ENCODE measurements at regions of chr14 and their contacts with region 1.

Region 1: GRCh38 chr14:75783184-75783583 is 122.1 kb downstream of the TTLL5 start:
- DNase-seq: no peak
- ATAC-seq: no peak
- H3K4me3 ChIP-seq: no peak overlapping the region
- H3K27ac ChIP-seq: no peak overlapping the region
- H3K4me1 ChIP-seq: no peaks in the 10 kb centered on the region
- CTCF ChIP-seq: no peak
- EP300 ChIP-seq: no peak
- POLR2A ChIP-seq: no peak
- RAD21 ChIP-seq: no peak

Region 2: DNA sequence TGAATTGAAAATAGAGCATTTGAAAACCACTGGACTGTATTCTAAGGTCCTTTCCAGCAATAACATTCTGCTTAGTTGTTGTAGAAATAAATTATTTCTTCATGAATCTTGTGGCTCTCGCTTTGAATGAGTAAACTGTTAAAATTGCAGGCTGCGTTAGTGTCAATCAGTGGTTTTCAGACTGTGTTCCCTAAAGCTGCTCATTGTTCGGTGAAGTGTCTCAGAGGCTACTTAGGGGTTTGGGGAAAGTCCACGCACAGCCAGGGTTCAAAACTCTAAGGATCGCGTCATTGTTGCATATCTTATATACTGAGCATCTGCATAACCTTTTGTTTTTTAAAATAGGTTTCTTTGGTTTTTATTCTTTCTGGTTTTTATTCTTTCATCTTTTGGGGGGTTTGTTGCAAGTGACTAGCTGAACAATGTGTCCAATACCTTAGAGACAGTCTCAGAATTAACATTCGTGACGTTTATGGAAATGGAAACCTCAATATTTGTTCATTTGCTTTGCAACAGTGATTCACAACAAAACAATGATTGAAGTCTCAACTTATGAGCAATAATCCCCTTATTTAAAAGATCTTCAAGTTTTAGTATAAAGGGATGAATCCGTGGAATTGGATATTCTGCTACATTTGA is 14.0 kb before region 1 on chr14:
- CTCF ChIA-PET with region 1: no interaction called
- POLR2A ChIA-PET with region 1: no interaction called
- DNase-seq: no peak
- ATAC-seq: no peak
- H3K4me3 ChIP-seq: no peak overlapping the region
- H3K27ac ChIP-seq: no peak overlapping the region
- H3K4me1 ChIP-seq: no peaks in the 10 kb centered on the region
- CTCF ChIP-seq: no peak
- EP300 ChIP-seq: no peak
- POLR2A ChIP-seq: no peak
- RAD21 ChIP-seq: no peak

Region 3: GRCh38 chr14:75794615-75795038 is 11.4 kb after region 1 on chr14:
- CTCF ChIA-PET with region 1: interaction called, 12 read pairs
- POLR2A ChIA-PET with region 1: no interaction called
- DNase-seq: peak in 1 of 2 experiments; percentile 9
- ATAC-seq: peak; percentile 71 to 77; a peak in 4 of 6 replicates
- H3K4me3 ChIP-seq: no peak overlapping the region
- H3K27ac ChIP-seq: no peak overlapping the region
- H3K4me1 ChIP-seq: no peaks in the 10 kb centered on the region
- CTCF ChIP-seq: peak; percentile 15; the same call in 2 of the 3 replicates
- EP300 ChIP-seq: no peak
- POLR2A ChIP-seq: no peak
- RAD21 ChIP-seq: peak; percentile 24 to 28; a peak in 2 of 5 replicates